Gastrocnemius medialis (tissue), 4 donors: ENCODE measurements at regions of chr15 and their contacts with region 1.

Region 1: GRCh38 chr15:33067941-33068481 is 126.5 kb downstream of the FMN1 start:
- DNase-seq: peak; percentile 45 to 51
- ATAC-seq: peak; percentile 48 to 73
- H3K4me3 ChIP-seq: peak overlapping the region; percentile 32 to 42 (median 35)
- H3K27ac ChIP-seq: peak overlapping the region; percentile 6 to 49 (median 34)
- H3K4me1 ChIP-seq: peaks cover 8 to 11% of the 10 kb centered on the region in 2 donors
- H3K27me3 ChIP-seq: peaks cover 0 to 4% (median 0%) of the 10 kb centered on the region in 3 donors
- CTCF ChIP-seq: no peak
- POLR2A ChIP-seq: no peak

Region 2: DNA sequence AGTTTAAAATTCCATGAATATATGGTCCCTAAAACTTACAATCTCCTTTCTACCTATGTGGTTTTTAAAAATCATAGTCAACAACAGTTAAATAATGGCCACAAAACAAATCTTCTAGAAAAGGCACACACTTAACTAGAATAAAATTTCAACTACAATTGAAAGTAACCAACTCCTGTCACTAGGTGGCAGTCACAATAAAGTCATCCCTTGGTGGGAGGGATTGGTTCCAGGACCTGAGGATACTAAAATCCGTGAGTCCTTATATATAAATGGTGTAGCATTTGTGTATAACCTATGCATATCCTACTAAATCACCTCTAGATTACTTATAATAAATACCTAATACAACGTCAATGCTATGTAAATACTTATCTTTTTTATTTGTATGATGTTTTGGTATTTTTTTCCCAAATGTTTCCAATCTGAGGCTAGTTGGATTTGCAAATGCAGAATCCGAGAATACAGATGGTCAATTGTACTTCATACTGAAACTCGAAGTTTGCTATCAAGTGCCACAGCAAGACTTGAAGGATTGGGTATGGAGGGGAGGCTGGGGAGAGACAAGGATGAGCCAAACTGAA is 46.1 kb before region 1 on chr15:
- in situ Hi-C with region 1: no loop called
- intact Hi-C with region 1: loop called (anchors 1 kb)
- DNase-seq: peak in 1 of 2 donors; percentile 19
- ATAC-seq: peak; percentile 80 to 90
- H3K4me3 ChIP-seq: peak overlapping the region in 1 of 4 donors; percentile 21
- H3K27ac ChIP-seq: peak overlapping the region; percentile 72 to 85 (median 76)
- H3K4me1 ChIP-seq: peaks cover 15 to 25% of the 10 kb centered on the region in 2 donors
- H3K27me3 ChIP-seq: no peaks in the 10 kb centered on the region
- CTCF ChIP-seq: peak in 4 of 5 experiments; percentile 50 to 64 (median 58)
- POLR2A ChIP-seq: no peak

Region 3: DNA sequence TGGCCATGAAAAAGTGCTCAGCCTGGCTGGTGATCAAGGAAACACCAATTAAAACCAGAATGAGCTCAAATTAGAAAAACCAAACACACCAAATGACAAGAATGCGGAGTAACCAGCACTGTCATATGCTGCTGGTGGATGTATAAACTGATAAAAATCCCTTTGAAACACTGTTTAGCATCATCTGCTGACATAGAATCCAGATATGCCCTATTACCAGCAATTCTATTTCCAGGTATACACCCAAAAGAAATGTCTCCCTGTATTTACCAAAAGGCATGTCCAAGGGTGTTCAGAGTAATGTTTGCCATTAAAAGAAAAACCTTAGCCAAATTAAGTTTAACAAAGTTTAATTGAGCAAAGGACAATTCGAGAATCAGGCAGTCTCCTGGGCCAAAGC is 12.0 kb before region 1 on chr15:
- in situ Hi-C with region 1: no loop called
- intact Hi-C with region 1: no loop called
- DNase-seq: no peak
- ATAC-seq: no peak
- H3K4me3 ChIP-seq: no peak overlapping the region
- H3K27ac ChIP-seq: no peak overlapping the region
- H3K4me1 ChIP-seq: no peaks in the 10 kb centered on the region
- H3K27me3 ChIP-seq: no peaks in the 10 kb centered on the region
- CTCF ChIP-seq: no peak
- POLR2A ChIP-seq: no peak

Region 4: GRCh38 chr15:33126559-33127290 is 58.7 kb after region 1 on chr15:
- in situ Hi-C with region 1: no loop called
- intact Hi-C with region 1: no loop called
- DNase-seq: peak; percentile 53 to 58
- ATAC-seq: peak; percentile 67 to 79
- H3K4me3 ChIP-seq: no peak overlapping the region
- H3K27ac ChIP-seq: no peak overlapping the region
- H3K4me1 ChIP-seq: peaks cover 20 to 24% of the 10 kb centered on the region in 2 donors
- H3K27me3 ChIP-seq: no peaks in the 10 kb centered on the region
- CTCF ChIP-seq: no peak
- POLR2A ChIP-seq: no peak